GM18951 (cell line): ENCODE measurements at regions of chr12 and their contacts with region 1.

Region 1: GRCh38 chr12:53543539-53543938 is 36.3 kb upstream of the NPFF start:
- POLR2A ChIP-seq: no peak

Region 2: DNA sequence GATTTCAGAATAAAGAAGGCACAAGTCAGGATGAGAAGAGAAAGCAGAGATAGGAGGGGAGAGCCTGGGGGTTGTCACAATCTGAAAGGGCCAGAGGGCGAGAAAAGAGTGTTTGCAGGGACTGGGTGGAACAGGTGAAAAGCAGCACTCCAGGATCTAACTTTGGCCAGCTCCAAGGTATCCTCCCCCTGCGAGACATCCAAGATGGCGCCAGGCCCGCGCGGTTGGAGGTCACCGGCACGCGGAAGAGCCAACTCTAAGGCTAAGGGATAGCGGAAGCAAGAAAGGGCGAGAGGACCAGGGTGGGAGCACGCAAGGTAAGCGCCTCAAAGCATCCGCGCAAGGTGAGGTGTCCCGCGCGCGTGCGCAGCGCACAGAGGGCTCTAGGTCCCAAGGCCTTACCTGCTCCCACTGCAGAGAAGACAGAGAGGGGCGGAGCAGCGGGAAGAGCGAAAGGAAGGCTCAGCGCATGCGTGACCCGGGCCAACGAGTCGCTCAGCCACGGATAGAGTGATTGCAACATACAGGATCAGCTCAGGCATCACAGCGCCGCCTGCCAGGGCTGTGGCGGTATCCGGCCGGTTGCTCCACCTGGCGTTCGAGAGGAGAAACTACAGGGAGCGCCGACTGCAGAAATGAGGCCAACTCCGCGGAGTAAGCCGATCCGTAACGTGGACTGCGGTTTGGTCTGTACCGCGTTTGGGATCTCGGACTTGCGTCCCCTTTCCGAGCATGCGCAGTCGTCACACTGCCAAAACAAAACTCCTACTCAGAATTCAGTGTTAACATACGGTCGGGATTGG is 132.3 kb after region 1 on chr12 and contains the start of gene ATP5MC2:
- in situ Hi-C with region 1: loop called (anchors 5 kb)
- POLR2A ChIP-seq: peak; percentile 91